Dorsolateral prefrontal cortex (tissue), 120 donors: ENCODE measurements at regions of chr11 and their contacts with region 1.

Region 1: GRCh38 chr11:40293655-40294348 is 1165.7 kb downstream of the LRRC4C start:
- DNase-seq: peak; percentile 48 to 85 (median 84)
- H3K4me3 ChIP-seq: peak overlapping the region; percentile 53 to 95 (median 79)
- H3K27ac ChIP-seq: peak overlapping the region; percentile 66 to 99 (median 96)
- H3K27me3 ChIP-seq: no peaks in the 10 kb centered on the region
- CTCF ChIP-seq: peak; percentile 88 to 99 (median 96)

Region 2: GRCh38 chr11:39374963-39375698 is 918.7 kb before region 1 on chr11:
- intact Hi-C with region 1: loop called in 1 of 2 experiments (anchors 10 kb)
- DNase-seq: no peak
- H3K4me3 ChIP-seq: no peak overlapping the region
- H3K27ac ChIP-seq: no peak overlapping the region
- H3K27me3 ChIP-seq: no peaks in the 10 kb centered on the region
- CTCF ChIP-seq: peak; percentile 42 to 78 (median 63)

Region 3: DNA sequence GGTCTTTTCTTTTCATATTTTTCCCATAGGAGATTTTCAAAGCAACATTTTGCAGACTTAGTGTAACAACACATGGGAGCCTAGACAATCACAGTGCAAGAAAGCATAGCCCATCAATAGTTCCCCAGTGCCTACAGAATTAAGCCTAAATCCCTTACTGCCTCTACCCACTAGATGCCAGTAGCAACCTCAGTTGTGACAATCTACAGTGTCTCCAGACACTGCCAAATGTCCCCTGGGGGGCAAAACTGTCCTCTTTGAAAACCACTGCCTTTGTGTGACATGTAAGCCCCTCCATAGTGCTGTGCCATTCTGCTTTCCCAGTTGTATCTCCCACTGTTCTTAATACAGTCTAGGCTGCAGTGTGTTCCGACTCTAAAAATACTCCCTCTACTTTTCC is 163.4 kb before region 1 on chr11:
- intact Hi-C with region 1: loop called (anchors 1 to 2 kb)
- DNase-seq: peak in 2 of 10 donors; percentile 33 to 48
- H3K4me3 ChIP-seq: no peak overlapping the region
- H3K27ac ChIP-seq: peak overlapping the region in 11 of 59 donors; percentile 1 to 49 (median 7)
- H3K27me3 ChIP-seq: no peaks in the 10 kb centered on the region
- CTCF ChIP-seq: peak; percentile 27 to 80 (median 63)

Region 4: GRCh38 chr11:40186437-40187266 is 107.2 kb before region 1 on chr11:
- intact Hi-C with region 1: loop called (anchors 2 kb)
- DNase-seq: peak in 9 of 10 donors; percentile 23 to 80 (median 58)
- H3K4me3 ChIP-seq: peak overlapping the region in 37 of 59 donors; percentile 0 to 51 (median 26)
- H3K27ac ChIP-seq: peak overlapping the region; percentile 83 to 99 (median 97)
- H3K27me3 ChIP-seq: no peaks in the 10 kb centered on the region
- CTCF ChIP-seq: peak in 2 of 56 donors; percentile 10 to 15

Region 5: GRCh38 chr11:40281052-40281580 is 12.7 kb before region 1 on chr11:
- intact Hi-C with region 1: no loop called
- DNase-seq: no peak
- H3K4me3 ChIP-seq: peak overlapping the region; percentile 20 to 69 (median 52)
- H3K27ac ChIP-seq: peak overlapping the region in 58 of 59 donors; percentile 26 to 94 (median 83)
- H3K27me3 ChIP-seq: no peaks in the 10 kb centered on the region
- CTCF ChIP-seq: no peak

Region 6: GRCh38 chr11:40306938-40307548 is 13.2 kb after region 1 on chr11:
- intact Hi-C with region 1: no loop called
- DNase-seq: peak in 1 of 10 donors; percentile 12
- H3K4me3 ChIP-seq: no peak overlapping the region
- H3K27ac ChIP-seq: no peak overlapping the region
- H3K27me3 ChIP-seq: no peaks in the 10 kb centered on the region
- CTCF ChIP-seq: peak; percentile 24 to 83 (median 67)

Region 7: GRCh38 chr11:40819230-40819629 is 525.4 kb after region 1 on chr11:
- intact Hi-C with region 1: no loop called
- DNase-seq: no peak
- H3K4me3 ChIP-seq: no peak overlapping the region
- H3K27ac ChIP-seq: no peak overlapping the region
- H3K27me3 ChIP-seq: no peaks in the 10 kb centered on the region
- CTCF ChIP-seq: no peak

Region 8: GRCh38 chr11:41031551-41032060 is 737.8 kb after region 1 on chr11:
- intact Hi-C with region 1: no loop called
- DNase-seq: peak in 1 of 10 donors; percentile 56
- H3K4me3 ChIP-seq: no peak overlapping the region
- H3K27ac ChIP-seq: no peak overlapping the region
- H3K27me3 ChIP-seq: no peaks in the 10 kb centered on the region
- CTCF ChIP-seq: no peak

Region 9: GRCh38 chr11:41201156-41201555 is 907.4 kb after region 1 on chr11:
- intact Hi-C with region 1: loop called in 1 of 2 experiments (anchors 10 kb)
- DNase-seq: peak in 6 of 10 donors; percentile 31 to 75 (median 52)
- H3K4me3 ChIP-seq: no peak overlapping the region
- H3K27ac ChIP-seq: no peak overlapping the region
- H3K27me3 ChIP-seq: no peaks in the 10 kb centered on the region
- CTCF ChIP-seq: peak; percentile 42 to 79 (median 64)